HAP-1 (cell line): ENCODE measurements at regions of chr18 and their contacts with region 1.

Region 1: DNA sequence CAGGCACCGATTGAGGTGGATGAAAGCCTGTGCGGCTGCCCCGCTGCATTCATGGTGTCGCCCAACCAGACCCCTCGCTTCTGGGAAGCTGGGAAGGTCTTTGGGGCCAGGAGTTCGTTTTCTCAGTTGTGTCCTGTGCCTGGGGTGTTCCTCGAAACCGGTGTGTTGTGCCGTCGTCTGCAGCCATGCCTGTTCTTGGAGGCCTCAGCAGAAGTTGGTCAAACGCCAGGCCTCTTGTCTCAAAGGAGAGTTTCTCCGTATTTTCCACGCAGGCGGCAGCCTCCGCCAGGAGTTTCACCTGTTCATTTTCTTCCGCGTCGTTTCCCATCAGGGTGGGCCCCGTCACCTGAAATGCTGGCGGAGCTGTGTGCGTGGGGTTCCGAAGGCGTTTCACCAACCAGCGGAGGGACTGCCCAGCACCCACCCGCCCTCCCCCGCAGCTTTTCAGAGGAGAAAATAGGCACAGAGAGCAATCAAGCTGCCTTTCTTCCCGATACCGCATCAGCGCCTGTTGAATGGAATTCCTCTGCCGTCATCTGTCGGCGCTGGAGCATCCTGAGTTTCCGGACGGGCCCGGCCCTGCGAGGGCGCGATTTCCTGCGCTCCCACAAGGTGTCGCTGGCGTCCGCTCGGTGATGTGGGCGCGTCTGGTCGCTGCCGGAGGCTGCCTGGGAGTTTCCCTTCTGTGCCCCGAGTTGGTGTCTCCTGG is 17.0 kb upstream of the NFATC1 start:
- DNase-seq: peak; percentile 60 to 86
- H3K4me3 ChIP-seq: no peak overlapping the region
- H3K4me1 ChIP-seq: no peaks in the 10 kb centered on the region
- H3K27me3 ChIP-seq: no peaks in the 10 kb centered on the region

Region 2: GRCh38 chr18:79644006-79644665 is 265.4 kb after region 1 on chr18:
- in situ Hi-C with region 1: loop called (anchors 10 kb)
- DNase-seq: peak; percentile 61 to 88
- H3K4me3 ChIP-seq: no peak overlapping the region
- H3K4me1 ChIP-seq: no peaks in the 10 kb centered on the region
- H3K27me3 ChIP-seq: no peaks in the 10 kb centered on the region